ENCODE measurements at regions of chr6 and their contacts with region 1.

Region 1: GRCh38 chr6:30678964-30679726 is 6.3 kb upstream of the DHX16 start:
- DNase-seq: peak; percentile 93
- ATAC-seq: peak; percentile 87
- H3K4me3 ChIP-seq: peak overlapping the region; percentile 78
- H3K27ac ChIP-seq: peak overlapping the region; percentile 11
- H3K4me1 ChIP-seq: peaks cover 43% of the 10 kb centered on the region
- H3K27me3 ChIP-seq: no peaks in the 10 kb centered on the region
- CTCF ChIP-seq: peak; percentile 98

Region 2: GRCh38 chr6:30721198-30722024 is 42.3 kb after region 1 on chr6:
- intact Hi-C with region 1: loop called (anchors 2 kb)
- DNase-seq: peak; percentile 96
- ATAC-seq: peak; percentile 78
- H3K4me3 ChIP-seq: peak overlapping the region; percentile 75
- H3K27ac ChIP-seq: peak overlapping the region; percentile 93
- H3K4me1 ChIP-seq: peaks cover 36% of the 10 kb centered on the region
- H3K27me3 ChIP-seq: no peaks in the 10 kb centered on the region
- CTCF ChIP-seq: peak; percentile 46

Region 3: DNA sequence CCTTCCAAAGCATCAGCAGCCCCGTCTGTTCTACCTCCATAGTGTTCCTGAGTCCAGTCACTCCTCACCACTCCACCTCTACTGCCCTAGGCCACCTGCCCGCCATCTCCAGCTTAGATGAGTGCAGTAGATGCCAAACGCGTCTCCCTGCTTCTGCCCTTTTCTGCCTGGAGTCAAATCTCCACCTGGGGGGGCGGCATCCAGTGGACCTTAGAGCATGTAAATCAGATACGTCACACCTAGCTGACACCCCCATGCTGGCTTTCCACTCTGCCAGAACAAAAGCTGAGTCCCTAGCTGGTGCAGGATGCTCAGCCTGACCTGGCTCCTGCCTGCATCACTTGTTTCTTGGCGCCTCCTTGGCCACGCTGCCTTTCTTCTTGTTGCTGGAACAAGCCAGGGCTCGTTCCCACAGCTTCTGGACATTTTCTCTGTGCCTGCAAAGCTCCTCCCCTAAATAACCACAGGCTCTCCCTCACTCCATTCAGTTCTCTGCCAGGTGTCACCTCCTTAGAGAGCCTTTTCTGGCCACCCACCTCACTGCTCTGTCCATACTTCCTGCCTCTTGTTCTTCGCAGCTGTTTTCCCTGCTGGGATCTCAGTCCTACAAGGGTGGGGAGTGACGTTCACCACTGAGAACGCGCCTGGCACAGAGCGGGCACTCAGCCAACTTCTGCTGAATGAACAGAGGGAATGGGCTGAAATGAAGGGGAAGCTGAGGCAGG is 210.9 kb after region 1 on chr6:
- intact Hi-C with region 1: loop called (anchors 5 kb)
- DNase-seq: peak; percentile 42
- ATAC-seq: no peak
- H3K4me3 ChIP-seq: no peak overlapping the region
- H3K27ac ChIP-seq: no peak overlapping the region
- H3K4me1 ChIP-seq: peaks cover 17% of the 10 kb centered on the region
- H3K27me3 ChIP-seq: no peaks in the 10 kb centered on the region
- CTCF ChIP-seq: no peak

Region 4: GRCh38 chr6:30926644-30927043 is 247.5 kb after region 1 on chr6:
- intact Hi-C with region 1: no loop called
- DNase-seq: peak; percentile 82
- ATAC-seq: peak; percentile 91
- H3K4me3 ChIP-seq: no peak overlapping the region
- H3K27ac ChIP-seq: peak overlapping the region; percentile 80
- H3K4me1 ChIP-seq: peaks cover 8% of the 10 kb centered on the region
- H3K27me3 ChIP-seq: no peaks in the 10 kb centered on the region
- CTCF ChIP-seq: no peak